Naive thymus-derived CD4-positive, alpha-beta T cell (primary cell): ENCODE measurements at regions of chr15 and their contacts with region 1.

Region 1: DNA sequence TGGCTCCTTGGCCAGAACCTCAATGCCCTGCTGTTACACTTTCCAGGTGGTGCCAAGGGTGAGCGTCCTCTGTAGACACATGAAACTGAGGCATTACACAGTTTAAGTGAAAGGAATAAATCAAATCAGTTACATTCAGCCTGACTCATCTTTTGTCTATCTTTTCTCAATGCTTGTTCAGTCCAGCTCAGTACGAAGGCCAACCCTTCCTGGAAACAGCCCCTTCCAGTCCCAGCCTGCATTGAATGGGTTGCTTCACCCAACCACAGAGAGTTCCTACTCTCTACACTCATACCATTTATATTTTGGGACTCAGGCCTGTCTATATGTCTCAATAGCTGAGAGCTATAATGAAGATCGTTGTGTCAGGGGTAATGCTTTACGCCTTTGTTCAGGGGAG is 363.6 kb downstream of the RORA start:
- DNase-seq: no peak
- ATAC-seq: no peak
- H3K4me3 ChIP-seq: no peak overlapping the region
- H3K4me3 Mint-ChIP-seq: no peak overlapping the region
- H3K27ac ChIP-seq: no peak overlapping the region
- H3K27ac Mint-ChIP-seq: peak overlapping the region in 1 of 9 donors; percentile 46
- H3K4me1 ChIP-seq: peaks cover 3 to 6% of the 10 kb centered on the region in 2 donors
- H3K4me1 Mint-ChIP-seq: peaks cover 2 to 22% (median 16%) of the 10 kb centered on the region in 7 donors
- H3K27me3 ChIP-seq: no peaks in the 10 kb centered on the region
- H3K27me3 Mint-ChIP-seq: peaks cover 0 to 8% (median 0%) of the 10 kb centered on the region in 5 donors

Region 2: GRCh38 chr15:60592371-60593169 is 272.9 kb before region 1 on chr15:
- CTCF ChIA-PET with region 1: interaction called, 84 read pairs
- POLR2A ChIA-PET with region 1: interaction called, 8 read pairs
- intact Hi-C with region 1: loop called in 1 of 2 experiments (anchors 1 kb)
- DNase-seq: peak; percentile 72 to 89 (median 86)
- ATAC-seq: peak; percentile 95
- H3K4me3 ChIP-seq: peak overlapping the region; percentile 75
- H3K4me3 Mint-ChIP-seq: peak overlapping the region; percentile 84 to 89 (median 86)
- H3K27ac ChIP-seq: peak overlapping the region; percentile 96
- H3K27ac Mint-ChIP-seq: peak overlapping the region; percentile 83 to 93 (median 85)
- H3K4me1 ChIP-seq: peaks cover 6 to 29% of the 10 kb centered on the region in 2 donors
- H3K4me1 Mint-ChIP-seq: peaks cover 19 to 53% (median 48%) of the 10 kb centered on the region in 7 donors
- H3K27me3 ChIP-seq: no peaks in the 10 kb centered on the region
- H3K27me3 Mint-ChIP-seq: peaks cover 0 to 4% (median 0%) of the 10 kb centered on the region in 5 donors